B cell (primary cell): ENCODE measurements at regions of chr2 and their contacts with region 1.

Region 1: GRCh38 chr2:210171309-210172203 is at the start of gene KANSL1L:
- DNase-seq: peak; percentile 96
- ATAC-seq: peak; percentile 85
- H3K4me3 ChIP-seq: peak within 1 kb of the TSS; percentile 75 to 96 (median 87)
- H3K4me3 Mint-ChIP-seq: peak within 1 kb of the TSS; percentile 92
- H3K27ac ChIP-seq: peak within 1 kb of the TSS; percentile 91 to 93
- H3K27ac Mint-ChIP-seq: peak within 1 kb of the TSS; percentile 97
- H3K4me1 ChIP-seq: peaks cover 13 to 18% of the 10 kb centered on the region in 2 donors
- H3K4me1 Mint-ChIP-seq: peaks cover 17% of the 10 kb centered on the region
- H3K27me3 ChIP-seq: peaks cover 0 to 5% (median 0%) of the 10 kb centered on the region in 4 experiments
- H3K27me3 Mint-ChIP-seq: peaks cover 7% of the 10 kb centered on the region
- CTCF ChIP-seq: no peak
- total RNA-seq, gene KANSL1L: 21.1 and 25.5 TPM in 2 replicates

Region 2: DNA sequence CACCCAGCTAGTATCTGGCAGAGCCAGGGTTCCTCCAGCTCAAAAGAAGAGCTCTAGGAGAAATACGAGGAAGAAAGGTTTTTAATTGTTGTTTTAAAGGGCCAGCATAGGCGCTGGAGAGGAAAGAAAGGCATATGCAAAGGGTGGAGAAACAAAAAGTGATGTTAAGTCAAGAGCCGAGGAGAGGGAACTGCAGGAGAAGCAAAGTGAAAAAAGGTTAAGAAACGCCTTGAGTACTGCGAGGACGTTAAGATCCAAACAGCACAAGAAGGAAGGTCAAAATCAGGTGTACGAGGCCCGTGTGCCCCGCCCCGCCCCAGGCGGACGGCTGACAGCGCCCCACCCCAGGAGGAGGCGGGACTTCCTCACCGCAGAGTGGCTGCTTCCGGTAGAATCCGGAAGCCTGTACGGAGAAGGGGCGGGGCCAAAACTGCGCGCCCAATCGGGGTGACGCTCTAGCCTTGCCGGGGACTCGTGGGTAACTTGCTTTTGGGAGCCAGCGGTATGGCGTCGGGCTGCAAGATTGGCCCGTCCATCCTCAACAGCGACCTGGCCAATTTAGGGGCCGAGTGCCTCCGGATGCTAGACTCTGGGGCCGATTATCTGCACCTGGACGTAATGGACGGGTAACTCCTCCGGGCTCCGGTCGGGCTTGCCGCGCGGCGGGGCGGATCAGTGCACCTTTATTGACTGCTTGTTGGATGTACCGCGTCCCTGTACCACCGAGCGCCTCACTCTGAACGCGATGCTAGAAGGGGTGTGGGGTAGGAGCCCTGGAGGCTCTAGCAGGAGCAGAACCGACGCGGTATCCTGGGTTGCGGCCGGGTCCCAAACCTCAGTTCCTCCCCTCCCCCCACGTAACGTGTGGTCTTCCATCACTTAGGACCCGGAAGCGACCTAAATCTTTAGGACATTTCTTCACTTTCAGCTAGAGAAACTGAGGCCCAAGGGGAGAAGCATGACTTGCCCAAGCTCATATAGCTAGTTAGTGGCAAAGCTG is 169.1 kb before region 1 on chr2 and contains the start of gene RPE:
- CTCF ChIA-PET with region 1: no interaction called
- POLR2A ChIA-PET with region 1: no interaction called
- intact Hi-C with region 1: loop called (anchors 1 kb)
- DNase-seq: peak; percentile 97
- ATAC-seq: peak; percentile 99
- H3K4me3 ChIP-seq: peak within 1 kb of the TSS; percentile 79 to 96 (median 93)
- H3K4me3 Mint-ChIP-seq: peak within 1 kb of the TSS; percentile 89
- H3K27ac ChIP-seq: peak within 1 kb of the TSS; percentile 68 to 88
- H3K27ac Mint-ChIP-seq: peak within 1 kb of the TSS; percentile 92
- H3K4me1 ChIP-seq: peaks cover 28 to 33% of the 10 kb centered on the region in 2 donors
- H3K4me1 Mint-ChIP-seq: peaks cover 45% of the 10 kb centered on the region
- H3K27me3 ChIP-seq: no peaks in the 10 kb centered on the region
- H3K27me3 Mint-ChIP-seq: peaks cover 3% of the 10 kb centered on the region
- CTCF ChIP-seq: no peak
- total RNA-seq, gene RPE: 47.8 and 50.7 TPM in 2 replicates

Region 3: DNA sequence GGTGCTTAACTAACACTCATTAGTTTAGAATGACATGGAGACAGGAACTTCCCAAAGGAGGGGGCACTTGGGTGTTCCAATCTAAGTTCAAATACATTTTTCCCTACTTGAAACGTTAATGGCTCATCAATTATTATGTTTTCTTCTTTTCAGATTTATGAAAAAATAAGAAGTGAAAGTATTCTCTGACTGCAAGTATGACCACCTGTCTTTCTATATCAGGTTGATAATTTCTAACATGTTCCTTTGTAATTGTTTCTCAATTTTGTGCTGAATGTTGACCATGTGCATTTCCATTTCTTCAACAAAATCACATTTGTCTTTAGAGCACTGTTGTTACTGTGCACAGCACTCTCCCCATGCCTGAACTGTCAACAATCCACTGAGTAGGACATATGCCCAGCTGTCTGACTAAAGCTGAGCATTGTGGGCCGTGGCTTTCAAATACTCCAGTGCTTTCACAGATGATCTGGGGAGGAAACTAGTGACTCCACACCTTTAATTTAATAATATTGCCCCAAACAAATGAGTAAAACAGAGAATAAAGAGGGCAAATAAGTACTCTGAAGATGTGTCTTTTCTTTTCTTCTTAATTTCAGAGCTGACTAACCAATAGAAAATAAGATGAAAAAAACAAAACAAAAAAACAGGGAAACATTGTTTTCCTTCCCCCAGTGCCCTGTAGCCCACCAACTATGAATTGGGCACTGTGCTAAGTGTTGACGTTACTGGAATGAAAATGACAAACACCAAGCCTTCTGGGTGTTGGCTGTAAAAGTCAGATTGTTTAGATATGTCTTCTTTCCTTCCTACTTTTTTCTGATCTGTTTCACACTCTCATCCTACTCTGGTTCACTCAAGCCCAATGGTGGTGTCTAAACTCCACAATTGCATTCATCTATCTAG is 289.0 kb after region 1 on chr2:
- CTCF ChIA-PET with region 1: no interaction called
- POLR2A ChIA-PET with region 1: no interaction called
- intact Hi-C with region 1: loop called (anchors 5 kb)
- DNase-seq: no peak
- ATAC-seq: peak; percentile 19
- H3K4me3 ChIP-seq: no peak overlapping the region
- H3K4me3 Mint-ChIP-seq: peak overlapping the region; percentile 74
- H3K27ac ChIP-seq: peak overlapping the region; percentile 17 to 82
- H3K27ac Mint-ChIP-seq: peak overlapping the region; percentile 64
- H3K4me1 ChIP-seq: peaks cover 41 to 50% of the 10 kb centered on the region in 2 donors
- H3K4me1 Mint-ChIP-seq: peaks cover 58% of the 10 kb centered on the region
- H3K27me3 ChIP-seq: no peaks in the 10 kb centered on the region
- H3K27me3 Mint-ChIP-seq: no peaks in the 10 kb centered on the region
- CTCF ChIP-seq: no peak

Region 4: DNA sequence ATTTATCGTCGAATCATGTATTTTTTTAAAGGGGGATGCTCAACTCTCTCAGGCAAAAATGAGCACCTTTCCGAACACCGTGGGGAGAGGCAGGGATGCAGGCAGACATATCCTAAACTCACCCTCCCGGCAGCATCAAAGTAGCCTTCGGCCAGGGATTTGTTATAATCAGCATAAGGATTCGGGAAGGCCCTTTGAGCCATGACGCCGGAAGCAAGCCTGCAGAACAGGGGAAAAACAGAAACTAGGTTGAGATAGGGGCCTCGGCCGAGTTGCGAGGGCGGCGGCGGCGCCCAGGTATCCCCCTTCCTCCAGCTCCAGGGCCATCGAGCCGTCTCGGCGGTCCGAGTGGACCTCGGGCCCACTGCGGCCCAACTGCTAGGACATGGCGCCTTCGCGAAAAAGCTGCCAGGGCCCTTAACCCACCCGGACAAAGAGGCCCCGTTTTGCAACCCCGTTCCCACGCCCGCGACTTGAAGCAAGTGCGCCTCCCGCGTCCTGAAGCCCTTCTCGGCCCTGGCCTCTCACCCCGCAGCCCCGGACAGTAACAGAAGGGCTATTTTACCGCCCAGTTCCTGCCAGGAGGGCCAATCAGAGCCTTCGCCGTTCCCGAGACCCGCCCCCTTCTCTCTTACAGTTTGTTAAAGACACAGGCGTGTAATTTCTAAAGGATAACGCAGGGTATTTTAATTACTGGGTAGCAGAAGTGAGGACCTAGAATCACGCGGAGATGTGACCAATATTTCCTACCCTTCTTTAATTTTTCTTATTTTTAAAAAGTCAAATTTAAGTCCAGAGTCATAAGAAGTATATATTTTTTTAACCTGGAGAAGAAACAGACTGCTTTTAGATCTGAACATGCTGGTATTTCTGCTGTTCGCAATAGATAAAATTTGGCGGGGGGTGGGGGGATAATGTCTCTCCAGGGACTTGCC is 304.9 kb after region 1 on chr2 and contains the start of gene LANCL1:
- CTCF ChIA-PET with region 1: no interaction called
- POLR2A ChIA-PET with region 1: no interaction called
- intact Hi-C with region 1: loop called (anchors 2 kb)
- DNase-seq: peak; percentile 84
- ATAC-seq: peak; percentile 100
- H3K4me3 ChIP-seq: peak within 1 kb of the TSS; percentile 64 to 95 (median 83)
- H3K4me3 Mint-ChIP-seq: peak within 1 kb of the TSS; percentile 100
- H3K27ac ChIP-seq: peak within 1 kb of the TSS; percentile 82 to 85
- H3K27ac Mint-ChIP-seq: peak within 1 kb of the TSS; percentile 98
- H3K4me1 ChIP-seq: peaks cover 14 to 15% of the 10 kb centered on the region in 2 donors
- H3K4me1 Mint-ChIP-seq: peaks cover 30% of the 10 kb centered on the region
- H3K27me3 ChIP-seq: no peaks in the 10 kb centered on the region
- H3K27me3 Mint-ChIP-seq: no peaks in the 10 kb centered on the region
- CTCF ChIP-seq: no peak
- total RNA-seq, gene LANCL1: 26.8 and 30.0 TPM in 2 replicates

Region 5: GRCh38 chr2:211623096-211623495 is 1451.5 kb after region 1 on chr2:
- CTCF ChIA-PET with region 1: no interaction called
- POLR2A ChIA-PET with region 1: no interaction called
- intact Hi-C with region 1: no loop called
- DNase-seq: no peak
- ATAC-seq: no peak
- H3K4me3 ChIP-seq: no peak overlapping the region
- H3K4me3 Mint-ChIP-seq: no peak overlapping the region
- H3K27ac ChIP-seq: no peak overlapping the region
- H3K27ac Mint-ChIP-seq: no peak overlapping the region
- H3K4me1 ChIP-seq: no peaks in the 10 kb centered on the region
- H3K4me1 Mint-ChIP-seq: no peaks in the 10 kb centered on the region
- H3K27me3 ChIP-seq: no peaks in the 10 kb centered on the region
- H3K27me3 Mint-ChIP-seq: no peaks in the 10 kb centered on the region
- CTCF ChIP-seq: no peak